CD4-positive, alpha-beta T cell (primary cell): ENCODE measurements at regions of chr14 and their contacts with region 1.

Region 1: DNA sequence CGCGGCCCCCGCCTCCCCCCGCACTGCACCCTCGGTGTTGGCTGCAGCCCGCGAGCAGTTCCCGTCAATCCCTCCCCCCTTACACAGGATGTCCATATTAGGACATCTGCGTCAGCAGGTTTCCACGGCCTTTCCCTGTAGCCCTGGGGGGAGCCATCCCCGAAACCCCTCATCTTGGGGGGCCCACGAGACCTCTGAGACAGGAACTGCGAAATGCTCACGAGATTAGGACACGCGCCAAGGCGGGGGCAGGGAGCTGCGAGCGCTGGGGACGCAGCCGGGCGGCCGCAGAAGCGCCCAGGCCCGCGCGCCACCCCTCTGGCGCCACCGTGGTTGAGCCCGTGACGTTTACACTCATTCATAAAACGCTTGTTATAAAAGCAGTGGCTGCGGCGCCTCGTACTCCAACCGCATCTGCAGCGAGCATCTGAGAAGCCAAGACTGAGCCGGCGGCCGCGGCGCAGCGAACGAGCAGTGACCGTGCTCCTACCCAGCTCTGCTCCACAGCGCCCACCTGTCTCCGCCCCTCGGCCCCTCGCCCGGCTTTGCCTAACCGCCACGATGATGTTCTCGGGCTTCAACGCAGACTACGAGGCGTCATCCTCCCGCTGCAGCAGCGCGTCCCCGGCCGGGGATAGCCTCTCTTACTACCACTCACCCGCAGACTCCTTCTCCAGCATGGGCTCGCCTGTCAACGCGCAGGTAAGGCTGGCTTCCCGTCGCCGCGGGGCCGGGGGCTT is at the start of gene FOS:
- DNase-seq: peak; percentile 79 to 97 (median 86)
- ATAC-seq: peak; percentile 66
- H3K4me3 ChIP-seq: peak within 1 kb of the TSS; percentile 88
- H3K4me3 Mint-ChIP-seq: peak within 1 kb of the TSS; percentile 94
- H3K27ac ChIP-seq: peak within 1 kb of the TSS; percentile 69 to 82
- H3K27ac Mint-ChIP-seq: peak within 1 kb of the TSS; percentile 92
- H3K4me1 ChIP-seq: peaks cover 71% of the 10 kb centered on the region
- H3K4me1 Mint-ChIP-seq: peaks cover 56% of the 10 kb centered on the region
- H3K27me3 ChIP-seq: peaks cover 4% of the 10 kb centered on the region in 2 experiments
- H3K27me3 Mint-ChIP-seq: peaks cover 73% of the 10 kb centered on the region
- CTCF ChIP-seq: no peak
- total RNA-seq, gene FOS: 1,565 to 1,685 TPM

Region 2: GRCh38 chr14:75258615-75259466 is 19.8 kb before region 1 on chr14:
- CTCF ChIA-PET with region 1: interaction called, 10 read pairs
- POLR2A ChIA-PET with region 1: interaction called, 17 read pairs
- intact Hi-C with region 1: loop called (anchors 1 kb)
- DNase-seq: peak; percentile 99 to 100 (median 100)
- ATAC-seq: peak; percentile 86
- H3K4me3 ChIP-seq: peak overlapping the region; percentile 50
- H3K4me3 Mint-ChIP-seq: peak overlapping the region; percentile 81
- H3K27ac ChIP-seq: peak overlapping the region; percentile 93 to 96
- H3K27ac Mint-ChIP-seq: peak overlapping the region; percentile 98
- H3K4me1 ChIP-seq: peaks cover 38% of the 10 kb centered on the region
- H3K4me1 Mint-ChIP-seq: peaks cover 45% of the 10 kb centered on the region
- H3K27me3 ChIP-seq: no peaks in the 10 kb centered on the region
- H3K27me3 Mint-ChIP-seq: no peaks in the 10 kb centered on the region
- CTCF ChIP-seq: no peak